ENCODE measurements at regions of chr12 and their contacts with region 1.

Region 1: GRCh38 chr12:49636979-49637755 is 13.8 kb downstream of the PRPF40B start:
- DNase-seq: peak; percentile 69 to 85 (median 84)
- H3K4me3 ChIP-seq: peak overlapping the region in 3 of 7 experiments; percentile 1 to 61 (median 38)
- H3K27ac ChIP-seq: no peak overlapping the region
- H3K4me1 ChIP-seq: peaks cover 3 to 13% (median 7%) of the 10 kb centered on the region in 4 experiments
- H3K27me3 ChIP-seq: no peaks in the 10 kb centered on the region

Region 2: DNA sequence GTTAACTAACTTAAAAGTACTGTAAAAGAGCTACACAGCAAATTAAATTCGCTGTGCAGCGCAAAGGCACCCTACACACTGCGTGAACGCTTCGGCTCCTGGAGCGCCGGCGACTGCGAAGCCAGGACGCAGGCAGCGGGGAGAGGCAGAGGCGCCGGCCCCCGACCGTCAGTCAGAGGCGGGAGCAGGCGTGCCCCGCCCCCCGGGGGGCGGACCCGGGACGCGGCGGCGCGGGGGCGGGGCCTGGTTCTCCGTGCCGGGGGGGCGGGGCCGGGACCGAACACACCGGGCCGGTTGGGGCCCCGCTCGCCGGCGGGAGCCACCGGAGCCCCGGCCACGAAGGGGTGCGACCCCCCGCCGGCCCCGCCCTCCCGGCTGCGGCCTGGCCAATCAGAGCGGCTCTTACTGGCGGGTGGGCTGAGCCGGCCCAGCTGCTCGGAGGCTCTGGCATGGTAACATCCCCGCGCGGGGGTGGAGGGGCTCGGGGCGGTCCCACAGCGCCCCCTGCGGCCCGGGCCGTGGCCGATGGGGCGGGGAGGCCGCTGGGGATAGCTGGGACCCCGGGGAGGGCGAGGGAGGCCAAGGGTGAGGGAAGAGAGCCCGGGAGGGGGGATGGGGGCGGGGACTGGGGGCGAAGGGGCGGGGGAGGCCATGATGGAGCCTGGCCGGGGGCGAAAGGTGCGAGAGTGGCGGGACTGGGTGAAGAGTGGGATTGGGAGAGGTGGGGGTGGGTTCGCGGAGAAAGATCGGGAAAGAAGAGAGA is 13.8 kb before region 1 on chr12 and contains the start of gene PRPF40B:
- CTCF ChIA-PET with region 1: interaction called, 67 read pairs
- POLR2A ChIA-PET with region 1: interaction called, 3 read pairs
- DNase-seq: peak; percentile 92 to 95 (median 95)
- H3K4me3 ChIP-seq: peak within 1 kb of the TSS; percentile 43 to 83 (median 66)
- H3K27ac ChIP-seq: peak within 1 kb of the TSS in 1 of 2 experiments; percentile 25
- H3K4me1 ChIP-seq: peaks cover 0 to 26% (median 20%) of the 10 kb centered on the region in 4 experiments
- H3K27me3 ChIP-seq: peaks cover 0 to 7% (median 5%) of the 10 kb centered on the region in 5 experiments

Region 3: DNA sequence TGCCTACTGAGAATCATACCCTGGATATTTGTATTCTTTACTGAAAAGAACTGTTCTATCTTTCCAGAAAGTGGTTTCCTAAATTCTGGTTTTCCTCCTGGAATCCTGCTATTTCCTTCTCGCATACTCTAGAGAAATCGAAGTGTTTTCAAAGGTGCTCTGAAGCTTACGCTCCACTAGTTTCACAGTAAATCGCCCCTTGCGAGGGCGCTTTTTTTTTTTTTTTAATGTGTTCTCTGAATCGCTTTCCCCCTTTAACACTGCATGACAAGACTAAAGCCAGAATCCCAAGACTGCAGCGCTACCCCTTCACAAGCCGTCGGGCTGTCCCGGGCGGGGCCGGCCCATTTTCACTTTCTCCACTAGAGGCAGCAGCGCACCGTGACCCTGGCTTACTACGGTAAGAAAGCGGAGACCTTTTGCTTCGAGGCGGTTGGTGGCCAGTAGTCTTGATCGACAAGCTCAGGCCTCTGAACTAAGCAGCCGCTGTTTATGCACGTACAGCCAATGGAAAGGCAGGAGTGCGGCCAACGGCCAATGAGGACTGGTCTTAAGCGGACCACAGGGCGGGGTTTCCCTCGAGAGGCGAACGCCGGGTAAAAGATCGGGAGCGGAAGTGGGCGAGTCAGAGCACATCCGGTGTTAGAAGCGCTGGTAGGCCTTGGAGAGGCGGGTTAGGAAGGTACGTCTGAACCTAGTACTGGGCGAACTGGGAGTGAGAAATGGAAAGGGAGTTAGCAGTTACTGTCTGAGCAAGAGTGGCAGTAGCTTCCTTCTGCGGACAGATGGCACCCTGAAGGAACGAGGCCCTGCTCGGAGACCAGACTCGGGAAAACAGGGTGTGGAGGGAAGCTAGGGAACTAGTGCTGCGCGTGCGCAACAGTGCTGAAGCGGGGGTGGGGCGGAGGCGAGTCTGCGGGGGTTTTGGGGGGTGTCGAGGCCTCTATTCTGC is 104.0 kb after region 1 on chr12 and contains the start of gene TMBIM6:
- CTCF ChIA-PET with region 1: interaction called, 12 read pairs
- POLR2A ChIA-PET with region 1: no interaction called
- DNase-seq: peak; percentile 100
- H3K4me3 ChIP-seq: peak within 1 kb of the TSS; percentile 62 to 94 (median 81)
- H3K27ac ChIP-seq: peak within 1 kb of the TSS; percentile 96 to 99
- H3K4me1 ChIP-seq: peaks cover 12 to 34% (median 21%) of the 10 kb centered on the region in 4 experiments
- H3K27me3 ChIP-seq: no peaks in the 10 kb centered on the region

Region 4: GRCh38 chr12:50246873-50247612 is 609.9 kb after region 1 on chr12:
- CTCF ChIA-PET with region 1: no interaction called
- POLR2A ChIA-PET with region 1: no interaction called
- DNase-seq: peak in 1 of 3 donors; percentile 44
- H3K4me3 ChIP-seq: no peak overlapping the region
- H3K27ac ChIP-seq: no peak overlapping the region
- H3K4me1 ChIP-seq: peaks cover 0 to 7% (median 6%) of the 10 kb centered on the region in 4 experiments
- H3K27me3 ChIP-seq: no peaks in the 10 kb centered on the region